Vagina (tissue), 2 donors: ENCODE measurements at regions of chr19 and their contacts with region 1.

Region 1: DNA sequence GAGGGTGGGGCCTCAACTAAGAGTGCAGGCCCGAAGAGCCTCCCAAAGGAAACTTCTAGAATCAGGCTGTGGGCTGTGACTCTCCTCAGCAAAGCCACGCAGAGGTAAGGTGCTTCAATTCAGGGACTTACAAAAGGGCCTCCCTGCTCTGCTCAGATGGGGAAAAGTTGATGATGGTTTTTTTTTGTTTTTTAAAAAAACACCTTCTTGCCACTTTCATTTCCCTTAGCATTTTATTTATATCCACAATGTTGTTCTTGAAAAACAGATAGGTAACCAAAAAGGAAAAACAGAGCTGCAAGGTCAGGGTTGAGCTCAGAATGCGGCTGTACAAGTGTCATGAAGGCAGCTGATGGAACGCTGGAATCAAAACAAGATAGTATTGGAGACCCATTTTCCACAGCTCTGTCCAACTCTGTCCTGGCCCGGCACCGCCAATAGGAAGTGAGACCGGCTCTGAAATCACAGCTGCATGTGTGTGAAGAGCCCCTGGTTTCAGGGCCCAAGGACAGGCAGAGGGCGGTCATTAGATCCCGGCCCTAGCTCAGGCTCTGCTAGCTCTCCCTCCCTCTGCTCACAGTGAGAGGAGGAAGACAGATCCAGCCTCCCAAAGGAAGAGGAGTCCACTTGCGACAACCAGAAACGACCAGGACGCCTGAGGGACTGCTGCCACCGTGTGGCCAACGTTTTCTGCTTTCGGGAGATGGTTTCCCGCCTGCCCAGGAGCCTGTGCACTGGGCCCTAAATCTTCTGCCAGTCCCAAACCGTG is 58.3 kb downstream of the KLF2 start:
- DNase-seq: no peak
- H3K4me3 ChIP-seq: no peak overlapping the region
- H3K27ac ChIP-seq: peak overlapping the region; percentile 77
- H3K4me1 ChIP-seq: peaks cover 22% of the 10 kb centered on the region
- H3K27me3 ChIP-seq: no peaks in the 10 kb centered on the region
- CTCF ChIP-seq: peak; percentile 54 to 87 (median 80)
- POLR2A ChIP-seq: no peak

Region 2: DNA sequence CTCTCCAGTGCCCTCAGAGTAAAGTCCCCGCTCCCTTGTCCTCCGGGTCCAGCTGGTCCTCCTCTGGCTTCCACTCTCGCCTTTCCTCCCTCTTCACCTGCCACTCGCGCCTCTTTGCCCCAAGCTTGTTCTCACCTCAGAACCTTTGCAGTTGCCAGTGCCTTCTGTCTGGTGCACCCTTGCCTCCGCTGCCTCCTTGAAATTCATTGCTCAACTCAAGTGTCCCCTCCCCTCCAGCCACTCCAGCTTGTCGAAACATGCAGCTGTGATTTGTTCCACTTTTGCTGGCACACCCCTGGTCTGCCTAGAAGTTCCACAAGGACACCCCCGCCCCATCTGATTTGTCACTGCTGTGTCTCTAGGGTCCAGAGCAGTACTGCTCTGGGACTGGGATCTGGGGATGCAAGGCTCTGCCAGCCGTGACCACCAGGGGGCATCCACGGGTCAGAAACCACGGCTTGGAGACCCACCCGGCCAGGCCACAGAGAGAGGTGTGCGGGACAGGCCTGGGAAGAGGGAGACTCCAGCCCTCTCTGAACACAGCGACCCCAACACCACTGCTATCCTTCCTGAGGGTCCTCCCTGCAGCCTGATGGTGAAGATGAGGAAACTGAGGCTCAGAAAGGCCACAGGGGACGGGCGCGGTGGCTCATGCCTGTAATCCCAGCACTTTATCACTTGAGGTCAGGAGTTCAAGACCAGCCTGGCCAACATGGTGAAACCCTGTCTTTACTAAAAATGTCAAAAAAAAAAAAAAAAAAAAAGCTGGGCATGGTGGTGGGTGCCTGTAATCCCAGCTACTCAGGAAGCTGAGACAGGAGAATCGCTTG is 135.4 kb before region 1 on chr19:
- intact Hi-C with region 1: loop called (anchors 2 kb)
- DNase-seq: no peak
- H3K4me3 ChIP-seq: no peak overlapping the region
- H3K27ac ChIP-seq: no peak overlapping the region
- H3K4me1 ChIP-seq: peaks cover 11% of the 10 kb centered on the region
- H3K27me3 ChIP-seq: no peaks in the 10 kb centered on the region
- CTCF ChIP-seq: peak; percentile 92 to 98 (median 97)
- POLR2A ChIP-seq: no peak